Endothelial cell of umbilical vein (primary cell): ENCODE measurements at regions of chr11 and their contacts with region 1.

Region 1: GRCh38 chr11:114135737-114136151 is 76.2 kb downstream of the ZBTB16 start:
- DNase-seq: no peak
- H3K4me3 ChIP-seq: no peak overlapping the region
- H3K27ac ChIP-seq: no peak overlapping the region
- H3K4me1 ChIP-seq: peaks cover 42% of the 10 kb centered on the region
- H3K27me3 ChIP-seq: no peaks in the 10 kb centered on the region
- CTCF ChIP-seq: no peak
- POLR2A ChIP-seq: no peak

Region 2: GRCh38 chr11:114110952-114111947 is 24.5 kb before region 1 on chr11:
- CTCF ChIA-PET with region 1: interaction called, 5 read pairs
- POLR2A ChIA-PET with region 1: no interaction called
- dilution Hi-C with region 1: no loop called
- intact Hi-C with region 1: loop called (anchors 2 kb)
- DNase-seq: peak; percentile 75
- H3K4me3 ChIP-seq: peak overlapping the region in 1 of 3 experiments; percentile 32
- H3K27ac ChIP-seq: peak overlapping the region; percentile 25
- H3K4me1 ChIP-seq: peaks cover 20% of the 10 kb centered on the region
- H3K27me3 ChIP-seq: peaks cover 2% of the 10 kb centered on the region in 2 experiments
- CTCF ChIP-seq: no peak
- POLR2A ChIP-seq: no peak

Region 3: DNA sequence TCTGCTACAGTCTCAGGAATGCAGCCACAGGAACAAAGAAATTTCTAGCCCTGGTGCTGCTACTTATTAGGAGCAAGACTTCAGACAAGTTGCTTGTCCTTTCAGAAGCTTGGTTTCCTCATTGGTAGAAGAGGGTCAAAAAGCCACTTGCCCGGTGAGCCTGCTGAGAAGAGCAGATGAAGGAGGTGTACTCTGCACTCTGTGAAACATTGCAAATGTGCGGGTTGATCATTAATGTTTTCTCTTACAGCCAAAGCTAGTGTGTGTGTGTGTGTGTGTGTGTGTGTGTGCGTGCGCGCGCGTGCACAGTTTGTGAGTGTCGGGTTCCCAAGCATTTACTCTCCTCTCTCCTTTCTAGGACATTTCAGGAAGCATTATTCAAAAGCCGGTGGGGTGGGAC is 74.2 kb after region 1 on chr11:
- CTCF ChIA-PET with region 1: no interaction called
- POLR2A ChIA-PET with region 1: no interaction called
- dilution Hi-C with region 1: no loop called
- intact Hi-C with region 1: no loop called
- DNase-seq: no peak
- H3K4me3 ChIP-seq: no peak overlapping the region
- H3K27ac ChIP-seq: no peak overlapping the region
- H3K4me1 ChIP-seq: peaks cover 8% of the 10 kb centered on the region
- H3K27me3 ChIP-seq: no peaks in the 10 kb centered on the region
- CTCF ChIP-seq: no peak
- POLR2A ChIP-seq: no peak